ENCODE measurements at regions of chr6 and their contacts with region 1.

Region 1: DNA sequence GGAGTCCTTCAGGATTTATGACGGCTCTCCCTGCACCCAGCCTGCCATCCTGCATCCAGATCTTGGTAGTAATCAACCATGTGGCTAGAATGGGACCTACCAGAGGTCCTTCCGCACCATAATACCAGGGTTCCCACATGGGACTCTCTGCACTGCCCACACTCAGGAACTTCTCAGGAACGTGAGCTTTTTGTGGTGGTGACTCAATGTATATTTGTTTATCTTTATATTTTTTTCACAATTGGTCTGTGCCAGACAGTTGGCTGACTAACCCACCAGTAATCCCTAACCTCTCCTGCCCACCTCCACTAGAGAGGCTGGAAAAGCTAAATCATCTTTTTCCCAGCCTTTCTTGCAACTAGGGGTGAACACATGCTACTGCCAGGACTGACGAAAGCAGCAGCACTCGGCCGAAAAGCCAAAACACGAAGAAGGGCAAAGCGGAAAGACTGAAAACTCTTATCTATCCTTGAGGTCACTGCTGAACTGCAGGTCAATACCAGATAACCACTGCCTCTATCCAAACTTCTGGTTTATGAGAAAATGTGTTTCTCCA is 113.0 kb downstream of the TRERF1 start:
- DNase-seq: peak; percentile 19
- H3K4me3 Mint-ChIP-seq: peak overlapping the region; percentile 5
- H3K27ac Mint-ChIP-seq: peak overlapping the region; percentile 64
- H3K4me1 Mint-ChIP-seq: peaks cover 49% of the 10 kb centered on the region
- H3K27me3 Mint-ChIP-seq: no peaks in the 10 kb centered on the region

Region 2: DNA sequence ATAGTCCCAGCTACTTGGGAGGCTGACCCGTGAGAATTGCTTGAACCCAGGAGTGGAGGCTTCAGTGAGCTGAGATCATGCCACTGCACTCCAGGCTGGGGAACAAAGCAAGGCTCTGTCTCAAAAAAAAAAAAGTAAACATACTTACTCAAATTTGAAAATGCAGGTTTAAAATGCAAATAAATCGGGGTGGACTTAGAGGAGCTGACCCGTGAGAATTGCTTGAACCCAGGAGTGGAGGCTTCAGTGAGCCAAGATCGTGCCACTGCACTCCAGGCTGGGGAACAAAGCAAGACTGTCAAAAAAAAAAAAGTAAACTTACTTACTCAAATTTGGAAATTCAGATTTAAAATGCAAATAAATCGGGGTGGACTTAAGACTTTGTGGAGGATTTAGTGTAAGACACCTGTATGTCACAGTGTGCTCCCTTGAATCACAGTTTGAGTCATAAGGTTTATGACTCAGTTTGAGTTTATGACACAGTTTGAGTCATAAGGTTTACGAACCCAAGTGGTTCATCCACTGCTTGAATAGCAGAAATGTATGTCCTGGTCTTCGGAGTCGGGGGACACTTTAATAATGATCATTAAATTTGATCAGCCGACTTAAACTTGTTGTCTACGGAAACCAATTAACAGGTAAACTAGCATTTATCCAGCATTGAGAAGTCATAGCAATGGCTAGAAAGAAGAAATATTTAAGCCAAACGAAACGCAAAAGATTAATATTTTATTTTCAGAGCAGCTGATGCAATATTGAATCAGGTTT is 114.3 kb before region 1 on chr6:
- CTCF ChIA-PET with region 1: no interaction called
- intact Hi-C with region 1: loop called (anchors 2 kb)
- DNase-seq: peak; percentile 17
- H3K4me3 Mint-ChIP-seq: peak overlapping the region; percentile 36
- H3K27ac Mint-ChIP-seq: peak overlapping the region; percentile 80
- H3K4me1 Mint-ChIP-seq: peaks cover 22% of the 10 kb centered on the region
- H3K27me3 Mint-ChIP-seq: no peaks in the 10 kb centered on the region

Region 3: GRCh38 chr6:42352856-42353564 is 14.3 kb after region 1 on chr6:
- CTCF ChIA-PET with region 1: interaction called, 5 read pairs
- intact Hi-C with region 1: loop called (anchors 1 kb)
- DNase-seq: no peak
- H3K4me3 Mint-ChIP-seq: no peak overlapping the region
- H3K27ac Mint-ChIP-seq: no peak overlapping the region
- H3K4me1 Mint-ChIP-seq: peaks cover 11% of the 10 kb centered on the region
- H3K27me3 Mint-ChIP-seq: no peaks in the 10 kb centered on the region

Region 4: DNA sequence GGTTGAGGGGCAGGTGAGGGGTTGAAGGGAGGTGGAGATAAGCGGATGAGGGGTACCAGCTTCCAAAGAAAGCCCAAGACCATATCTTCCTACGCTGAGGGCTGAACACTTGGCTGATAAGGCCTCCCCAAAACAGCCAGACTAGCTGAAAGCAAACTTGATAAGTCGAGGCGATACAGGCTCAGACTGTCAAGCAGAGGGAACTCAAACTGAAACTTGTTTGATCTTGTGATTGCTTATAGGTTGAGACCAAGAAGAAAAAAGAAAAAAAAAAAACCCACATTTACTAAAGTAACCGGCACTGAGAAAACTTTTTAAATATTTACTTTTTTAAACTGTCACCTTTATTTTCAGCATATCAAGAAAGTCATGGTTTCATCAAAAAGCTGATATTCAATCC is 39.4 kb after region 1 on chr6:
- CTCF ChIA-PET with region 1: interaction called, 3 read pairs
- intact Hi-C with region 1: loop called (anchors 2 kb)
- DNase-seq: peak; percentile 66
- H3K4me3 Mint-ChIP-seq: peak overlapping the region; percentile 7
- H3K27ac Mint-ChIP-seq: peak overlapping the region; percentile 47
- H3K4me1 Mint-ChIP-seq: peaks cover 47% of the 10 kb centered on the region
- H3K27me3 Mint-ChIP-seq: no peaks in the 10 kb centered on the region

Region 5: DNA sequence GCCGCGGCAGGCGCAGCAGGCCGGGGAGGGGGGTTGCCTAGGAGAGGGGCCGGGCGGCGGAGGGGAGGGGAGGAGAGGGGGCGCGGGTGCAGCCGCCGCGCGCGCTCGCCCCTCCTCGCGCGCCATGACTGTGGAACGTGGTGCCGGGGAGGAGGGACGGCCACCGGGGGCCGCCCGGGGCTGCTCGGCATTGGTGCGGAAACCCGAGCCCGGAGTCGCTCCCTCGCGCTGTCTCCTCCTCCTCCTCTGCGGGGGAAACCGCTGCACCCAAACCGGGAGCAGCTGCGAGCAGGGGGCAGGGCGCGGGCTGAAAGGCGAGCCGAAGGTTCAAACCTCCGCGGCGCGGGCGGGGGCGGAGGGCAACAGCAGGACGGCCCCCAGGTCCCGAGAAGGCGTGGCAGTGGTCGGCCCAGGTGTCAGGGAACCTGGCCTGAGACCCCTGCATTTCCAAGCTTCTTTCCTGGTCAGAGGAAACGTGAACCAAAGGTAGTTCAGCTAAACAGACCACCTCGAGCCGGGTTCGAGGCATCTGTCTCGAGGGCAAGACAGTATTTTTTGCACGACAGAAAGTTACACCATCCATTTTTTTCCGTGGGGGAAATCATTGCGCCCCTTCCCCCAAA is 114.4 kb after region 1 on chr6:
- CTCF ChIA-PET with region 1: no interaction called
- intact Hi-C with region 1: loop called (anchors 1 kb)
- DNase-seq: peak; percentile 87
- H3K4me3 Mint-ChIP-seq: peak overlapping the region; percentile 88
- H3K27ac Mint-ChIP-seq: peak overlapping the region; percentile 81
- H3K4me1 Mint-ChIP-seq: peaks cover 32% of the 10 kb centered on the region
- H3K27me3 Mint-ChIP-seq: peaks cover 7% of the 10 kb centered on the region

Measured in activated naive CD4-positive, alpha-beta T cell treated with anti-CD3 and anti-CD28 coated beads for 36 hours (primary cell).